ENCODE measurements at regions of chr19 and their contacts with region 1.

Region 1: DNA sequence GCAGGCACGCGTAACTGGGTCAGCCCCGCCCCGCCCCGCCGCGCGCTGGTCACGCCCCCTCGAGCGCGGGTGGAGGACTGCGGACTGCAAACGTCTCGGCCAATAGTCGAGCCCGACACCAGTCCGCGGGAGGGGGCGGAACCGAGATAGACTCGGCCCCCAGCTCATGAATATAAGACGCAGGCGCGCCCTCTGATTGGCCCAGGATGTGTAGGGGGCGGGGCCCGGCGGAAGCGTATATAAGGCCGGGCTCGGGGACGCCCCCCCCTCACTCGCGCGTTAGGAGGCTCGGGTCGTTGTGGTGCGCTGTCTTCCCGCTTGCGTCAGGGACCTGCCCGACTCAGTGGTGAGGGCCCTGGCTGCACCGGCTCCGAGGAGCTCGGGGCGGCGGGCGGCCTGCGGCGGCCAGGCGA is at the start of gene CIRBP:
- DNase-seq: peak; percentile 100
- H3K4me3 ChIP-seq: peak within 1 kb of the TSS; percentile 58
- CTCF ChIP-seq: no peak
- POLR2A ChIP-seq: peak in 1 of 2 donors; percentile 97
- total RNA-seq, gene CIRBP: 496 to 546 (median 545) TPM

Region 2: DNA sequence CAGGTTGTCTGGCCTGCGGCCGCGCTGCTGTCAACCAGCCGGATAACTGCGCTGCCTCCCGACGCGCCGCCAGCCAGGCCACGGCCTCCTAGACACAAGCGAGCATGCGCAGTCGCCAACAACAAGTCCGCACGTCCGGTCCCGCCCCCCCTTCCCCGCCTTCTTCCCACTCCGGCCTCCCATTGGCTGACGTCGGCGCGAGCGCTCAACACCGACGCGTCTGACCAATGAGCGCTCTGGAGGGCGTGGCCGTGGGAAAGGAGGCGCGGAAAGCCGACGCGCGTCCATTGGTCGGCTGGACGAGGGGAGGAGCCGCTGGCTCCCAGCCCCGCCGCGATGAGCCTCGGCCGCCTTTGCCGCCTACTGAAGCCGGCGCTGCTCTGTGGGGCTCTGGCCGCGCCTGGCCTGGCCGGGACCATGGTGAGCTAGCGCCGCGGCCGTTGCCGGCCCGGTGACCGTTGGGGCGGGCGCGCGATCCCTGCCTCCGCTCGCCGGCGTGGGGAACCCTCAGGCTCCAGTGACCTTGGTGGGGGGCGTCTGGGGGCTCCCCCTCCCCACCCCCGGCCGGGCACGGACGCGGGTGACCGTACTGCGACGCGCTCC is 165.3 kb before region 1 on chr19 and contains the start of gene GPX4:
- intact Hi-C with region 1: loop called (anchors 5 kb)
- DNase-seq: peak; percentile 98 to 100
- H3K4me3 ChIP-seq: peak within 1 kb of the TSS; percentile 67
- CTCF ChIP-seq: no peak
- POLR2A ChIP-seq: peak in 1 of 2 donors; percentile 86
- total RNA-seq, gene GPX4: 375 to 507 (median 469) TPM

Region 3: GRCh38 chr19:1243761-1244692 is 25.0 kb before region 1 on chr19:
- intact Hi-C with region 1: loop called (anchors 2 kb)
- DNase-seq: peak; percentile 85 to 97
- H3K4me3 ChIP-seq: no peak overlapping the region
- CTCF ChIP-seq: peak in 1 of 3 donors; percentile 86
- POLR2A ChIP-seq: no peak

Measured in lower leg skin (tissue), 4 donors.